ENCODE measurements at regions of chr2 and their contacts with region 1.

Region 1: DNA sequence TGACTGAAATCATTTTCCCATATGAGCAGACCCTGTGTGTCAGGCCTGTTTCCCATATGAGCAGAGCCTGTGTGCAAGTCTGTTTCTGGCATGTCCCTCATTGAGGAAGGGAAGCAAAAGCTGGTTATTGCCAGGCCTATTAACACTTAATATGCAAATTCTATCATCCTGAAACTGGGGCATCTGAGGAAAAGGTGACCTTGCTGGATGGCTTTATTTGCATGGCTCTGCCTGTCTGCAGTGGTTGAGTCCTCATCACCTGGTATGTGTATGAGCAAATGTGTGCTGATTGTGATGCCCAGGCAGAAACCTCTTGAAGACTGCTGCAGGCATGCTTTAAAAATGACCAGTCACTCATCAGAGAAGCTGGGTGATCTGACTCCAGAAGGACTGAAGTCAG is 31.2 kb downstream of the EIF4E2 start:
- DNase-seq: no peak
- H3K4me3 ChIP-seq: no peak overlapping the region
- H3K27ac ChIP-seq: no peak overlapping the region
- H3K4me1 ChIP-seq: no peaks in the 10 kb centered on the region
- H3K27me3 ChIP-seq: no peaks in the 10 kb centered on the region
- CTCF ChIP-seq: no peak
- EP300 ChIP-seq: no peak
- POLR2A ChIP-seq: no peak
- RAD21 ChIP-seq: no peak

Region 2: DNA sequence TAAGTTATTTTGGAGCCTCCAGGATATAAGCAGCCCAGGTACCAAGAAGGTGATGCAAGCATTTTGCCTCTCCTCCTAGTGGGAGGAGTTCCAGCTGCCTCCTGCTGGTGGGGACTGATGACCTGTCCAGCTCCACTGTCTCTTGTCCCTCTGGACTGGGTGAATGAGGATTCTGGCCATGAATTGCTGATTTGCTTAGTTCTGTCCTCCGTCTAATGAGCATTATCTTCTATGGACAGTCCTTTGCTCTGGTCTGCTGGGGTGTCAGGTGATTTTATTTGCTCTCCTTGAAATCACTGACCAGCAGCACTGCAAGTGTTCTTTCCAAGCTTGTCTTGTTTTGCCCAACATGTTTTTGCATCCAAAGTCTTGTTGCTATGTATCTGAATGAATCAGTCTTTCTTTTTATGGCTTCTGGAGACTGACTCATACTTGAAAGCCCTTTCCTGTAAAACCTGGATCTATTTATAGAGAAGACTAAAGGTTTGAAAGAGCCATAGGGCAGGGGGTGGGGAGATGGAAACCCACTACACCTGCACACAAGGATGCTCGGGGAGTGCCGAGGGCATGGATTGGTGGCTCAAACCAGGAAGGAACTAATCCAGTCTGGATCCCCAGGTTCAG is 11.2 kb after region 1 on chr2:
- CTCF ChIA-PET with region 1: interaction called, 11 read pairs
- POLR2A ChIA-PET with region 1: interaction called, 5 read pairs
- DNase-seq: no peak
- H3K4me3 ChIP-seq: no peak overlapping the region
- H3K27ac ChIP-seq: no peak overlapping the region
- H3K4me1 ChIP-seq: peaks cover 0 to 7% (median 0%) of the 10 kb centered on the region in 4 experiments; a peak in 2 of 7 replicates
- H3K27me3 ChIP-seq: no peaks in the 10 kb centered on the region
- CTCF ChIP-seq: peak in 1 of 3 experiments; percentile 12; a peak in 1 of 4 replicates
- EP300 ChIP-seq: no peak
- POLR2A ChIP-seq: no peak
- RAD21 ChIP-seq: no peak

Measured in H1 (cell line).